A549 (cell line): ENCODE measurements at regions of chr11 and their contacts with region 1.

Region 1: GRCh38 chr11:103108933-103109817 is at the start of gene DYNC2H1:
- DNase-seq: peak; percentile 72 to 91
- ATAC-seq: peak; percentile 96 to 98
- H3K4me3 ChIP-seq: peak within 1 kb of the TSS; percentile 60
- H3K27ac ChIP-seq: peak within 1 kb of the TSS; percentile 67 to 88
- H3K4me1 ChIP-seq: peaks cover 7% of the 10 kb centered on the region; the same call in 1 of the 3 replicates
- CTCF ChIP-seq: peak; percentile 50
- EP300 ChIP-seq: no peak
- POLR2A ChIP-seq: peak; percentile 15; the same call in 1 of the 2 replicates
- RAD21 ChIP-seq: peak; percentile 28 to 32; a peak in 2 of 5 replicates
- polyA plus RNA-seq, gene DYNC2H1: 13.3 and 14.8 TPM in 2 replicates

Region 2: GRCh38 chr11:103077554-103077953 is 31.6 kb before region 1 on chr11:
- CTCF ChIA-PET with region 1: no interaction called
- POLR2A ChIA-PET with region 1: no interaction called
- DNase-seq: no peak
- ATAC-seq: no peak
- H3K4me3 ChIP-seq: no peak overlapping the region
- H3K27ac ChIP-seq: no peak overlapping the region
- H3K4me1 ChIP-seq: peaks cover 8% of the 10 kb centered on the region; the same call in 2 of the 3 replicates
- CTCF ChIP-seq: no peak
- EP300 ChIP-seq: no peak
- POLR2A ChIP-seq: no peak
- RAD21 ChIP-seq: no peak

Region 3: DNA sequence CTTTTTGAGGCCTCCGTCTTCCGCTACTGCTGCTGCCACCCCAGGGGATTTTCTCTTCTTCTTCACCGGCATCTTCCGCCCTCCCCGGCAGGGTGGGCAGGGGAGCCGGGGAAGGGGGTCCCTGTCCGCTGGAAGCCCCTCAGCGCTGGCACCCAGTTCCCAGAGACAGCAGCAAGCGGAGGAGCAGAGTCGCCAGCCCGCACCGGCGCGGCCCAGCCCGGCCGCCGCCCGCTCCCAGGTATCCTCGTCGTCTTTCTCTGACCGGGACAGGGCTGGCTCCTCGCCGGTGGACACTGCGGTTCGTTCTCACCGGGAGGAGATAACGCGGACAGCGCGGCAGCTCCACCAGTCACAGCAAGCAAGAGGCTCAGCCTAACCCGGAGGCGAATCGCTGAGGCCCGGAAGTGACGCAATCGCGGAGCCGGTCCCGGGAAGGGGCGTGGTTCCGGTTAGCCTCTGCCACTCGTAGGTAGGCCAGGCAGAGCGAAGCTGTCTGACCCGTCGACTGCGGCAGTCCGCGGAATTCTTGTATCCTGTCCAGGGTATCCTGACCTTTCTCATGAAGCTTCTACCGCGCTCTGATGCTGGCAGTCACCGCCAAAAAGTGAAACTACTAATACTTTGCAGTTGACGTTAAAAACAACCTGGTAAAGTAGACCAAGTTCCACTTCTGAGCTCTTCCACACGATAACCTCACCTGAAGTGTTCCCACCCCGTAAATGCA is 17.2 kb before region 1 on chr11 and contains the start of gene DCUN1D5:
- CTCF ChIA-PET with region 1: interaction called, 13 read pairs
- POLR2A ChIA-PET with region 1: interaction called, 25 read pairs
- DNase-seq: peak; percentile 84 to 93
- ATAC-seq: peak; percentile 96 to 97
- H3K4me3 ChIP-seq: peak within 1 kb of the TSS; percentile 58
- H3K27ac ChIP-seq: peak within 1 kb of the TSS; percentile 77 to 95
- H3K4me1 ChIP-seq: peaks cover 15% of the 10 kb centered on the region; the same call in 2 of the 3 replicates
- CTCF ChIP-seq: no peak
- EP300 ChIP-seq: no peak
- POLR2A ChIP-seq: peak; percentile 90
- RAD21 ChIP-seq: no peak
- polyA plus RNA-seq, gene DCUN1D5: 62.7 and 78.0 TPM in 2 replicates

Region 4: DNA sequence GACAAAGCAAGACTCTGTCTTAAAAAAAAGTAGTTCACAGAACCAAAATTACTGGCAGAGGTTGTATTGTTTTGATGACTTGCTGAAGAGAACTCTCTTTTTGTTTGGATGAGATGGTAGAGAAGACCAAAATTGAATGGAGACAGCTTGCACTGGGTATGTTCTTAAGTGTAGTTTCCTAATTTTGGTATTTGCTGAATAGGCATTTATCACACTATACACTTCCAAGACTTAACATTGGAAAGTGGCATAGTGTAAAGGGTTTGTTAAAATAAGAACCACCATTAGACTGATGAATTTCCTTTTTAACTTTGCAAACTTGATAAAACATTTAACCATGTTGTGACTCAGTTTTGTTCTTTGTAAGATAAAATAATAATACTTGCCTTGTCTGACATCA is 11.9 kb before region 1 on chr11:
- CTCF ChIA-PET with region 1: interaction called, 13 read pairs
- POLR2A ChIA-PET with region 1: interaction called, 25 read pairs
- DNase-seq: no peak
- ATAC-seq: no peak
- H3K4me3 ChIP-seq: no peak overlapping the region
- H3K27ac ChIP-seq: no peak overlapping the region
- H3K4me1 ChIP-seq: no peaks in the 10 kb centered on the region
- CTCF ChIP-seq: no peak
- EP300 ChIP-seq: no peak
- POLR2A ChIP-seq: no peak
- RAD21 ChIP-seq: no peak

Region 5: DNA sequence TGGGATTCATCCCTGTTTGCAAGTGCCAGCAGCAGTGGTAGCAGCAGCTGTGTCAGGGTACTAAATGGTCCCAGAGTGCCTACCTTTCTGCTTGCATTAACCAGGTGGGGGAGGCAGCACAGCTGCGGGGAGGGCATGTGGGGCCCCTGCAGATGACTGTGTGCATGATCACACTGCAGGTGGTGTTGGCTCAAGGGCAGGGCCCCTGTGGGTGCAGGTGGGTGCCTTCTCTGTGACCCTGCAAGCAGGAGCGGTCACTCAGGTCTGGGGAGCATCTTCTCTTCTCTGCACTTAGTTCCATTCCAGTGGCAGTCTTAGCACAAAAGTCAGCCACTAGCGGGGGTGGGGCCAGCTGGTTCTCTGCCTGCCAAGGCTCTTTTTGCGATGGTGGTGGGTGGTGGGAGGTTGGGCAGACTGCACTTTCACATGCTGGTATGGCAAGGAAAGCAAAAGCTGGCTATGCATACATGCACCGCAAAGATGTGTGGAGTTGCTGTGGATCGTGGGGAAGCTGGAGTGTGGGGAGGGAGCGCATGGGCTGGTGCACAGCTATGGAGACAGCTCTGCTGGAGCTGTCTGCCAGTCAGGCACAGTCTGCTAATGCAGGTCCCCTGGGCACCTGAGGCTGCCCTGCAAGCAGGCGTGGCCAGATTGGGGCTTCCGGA is 157.1 kb after region 1 on chr11:
- CTCF ChIA-PET with region 1: no interaction called
- POLR2A ChIA-PET with region 1: no interaction called
- DNase-seq: no peak
- ATAC-seq: no peak
- H3K4me3 ChIP-seq: no peak overlapping the region
- H3K27ac ChIP-seq: no peak overlapping the region
- H3K4me1 ChIP-seq: no peaks in the 10 kb centered on the region
- CTCF ChIP-seq: no peak
- EP300 ChIP-seq: no peak
- POLR2A ChIP-seq: no peak
- RAD21 ChIP-seq: no peak